ENCODE measurements at regions of chr9 and their contacts with region 1.

Region 1: DNA sequence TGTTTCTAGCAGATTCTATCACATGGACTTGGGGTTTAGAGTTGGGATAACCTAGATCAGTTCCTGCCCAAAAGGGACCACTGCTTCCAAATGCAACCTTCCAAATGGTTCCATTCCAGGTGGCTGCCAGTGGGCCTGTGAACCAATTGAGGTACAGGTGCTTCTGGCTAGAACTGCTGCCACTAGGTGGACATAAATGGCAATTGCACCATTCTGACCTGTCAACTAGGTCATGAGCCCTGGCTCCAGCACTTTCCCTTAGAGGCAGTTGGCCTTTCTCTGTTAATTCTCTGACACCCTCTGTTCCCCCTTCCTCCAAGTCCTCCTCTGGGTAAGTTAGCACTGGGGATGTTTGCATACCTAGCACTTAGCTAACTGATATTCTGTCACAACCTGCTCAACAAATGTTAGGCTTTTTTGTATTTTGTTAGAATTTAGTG is 16.6 kb upstream of the HEMGN start:
- DNase-seq: peak; percentile 74 to 77 (median 76)
- H3K4me3 ChIP-seq: no peak overlapping the region
- H3K27ac ChIP-seq: peak overlapping the region in 1 of 2 experiments; percentile 6
- H3K4me1 ChIP-seq: peaks cover 0 to 21% (median 13%) of the 10 kb centered on the region in 4 experiments
- H3K27me3 ChIP-seq: no peaks in the 10 kb centered on the region

Region 2: DNA sequence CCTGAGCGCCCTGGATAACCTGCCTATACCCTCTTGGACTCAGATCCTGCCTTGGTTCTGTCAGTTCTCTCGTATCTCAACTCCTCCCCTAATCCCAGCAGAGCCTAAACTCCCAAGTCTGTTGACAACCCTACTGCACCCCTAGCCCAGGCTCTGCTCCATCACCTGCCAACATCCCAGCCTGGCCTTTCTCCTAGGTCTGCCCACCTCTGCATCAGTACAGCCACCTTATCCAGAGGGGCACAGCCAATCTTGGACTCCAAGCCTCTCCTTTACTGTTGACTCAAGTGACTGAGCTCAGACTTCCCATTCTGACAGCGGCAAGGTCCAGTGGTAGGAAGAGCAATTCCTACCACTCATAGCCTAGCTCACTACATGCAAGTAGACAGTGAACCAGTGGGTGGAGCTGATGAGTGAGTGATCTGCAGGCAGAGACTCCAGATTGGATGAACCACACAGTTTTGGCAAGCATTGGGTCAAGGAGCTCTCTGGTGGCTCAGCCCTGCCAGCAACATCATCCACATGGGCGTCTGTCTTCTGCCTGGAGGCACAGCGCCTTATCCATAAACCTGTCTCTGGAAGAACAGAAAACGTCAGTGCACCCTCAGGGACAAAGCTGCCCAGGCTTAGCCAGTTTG is 58.8 kb before region 1 on chr9:
- CTCF ChIA-PET with region 1: no interaction called
- POLR2A ChIA-PET with region 1: no interaction called
- DNase-seq: peak in 2 of 3 donors; percentile 22 to 23
- H3K4me3 ChIP-seq: no peak overlapping the region
- H3K27ac ChIP-seq: no peak overlapping the region
- H3K4me1 ChIP-seq: no peaks in the 10 kb centered on the region
- H3K27me3 ChIP-seq: no peaks in the 10 kb centered on the region

Region 3: GRCh38 chr9:97934321-97935115 is 20.1 kb before region 1 on chr9:
- CTCF ChIA-PET with region 1: interaction called, 34 read pairs
- POLR2A ChIA-PET with region 1: no interaction called
- DNase-seq: peak in 2 of 3 donors; percentile 61 to 71
- H3K4me3 ChIP-seq: peak overlapping the region in 6 of 7 experiments; percentile 27 to 69 (median 48)
- H3K27ac ChIP-seq: peak overlapping the region; percentile 51 to 92
- H3K4me1 ChIP-seq: peaks cover 47 to 91% (median 75%) of the 10 kb centered on the region in 4 experiments
- H3K27me3 ChIP-seq: no peaks in the 10 kb centered on the region

Region 4: DNA sequence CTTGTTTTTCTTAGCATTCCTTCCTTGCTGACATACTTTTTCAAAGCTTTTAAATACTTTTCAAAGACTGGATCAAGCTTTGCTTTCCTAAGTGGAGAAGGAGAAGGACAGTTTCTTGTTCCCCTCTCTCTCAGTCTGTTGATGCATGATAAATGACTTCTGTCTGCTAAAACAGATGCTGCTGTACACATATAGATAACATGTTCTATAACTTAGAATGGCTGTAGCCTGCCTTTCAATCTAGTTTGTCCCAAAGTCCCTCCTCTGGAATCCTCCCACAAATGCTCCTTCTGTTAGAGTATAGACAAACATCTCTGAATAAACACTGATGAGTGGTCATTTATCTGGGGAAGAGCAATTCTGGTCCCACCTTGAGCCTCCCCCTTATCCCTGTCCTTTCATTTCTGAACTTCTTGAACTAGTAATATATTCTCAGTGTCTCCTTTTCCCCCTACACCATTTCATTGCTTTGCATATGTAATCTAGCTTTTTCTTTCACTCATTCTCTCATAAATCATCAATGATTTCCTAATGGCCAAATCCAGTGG is 11.2 kb before region 1 on chr9:
- CTCF ChIA-PET with region 1: interaction called, 25 read pairs
- POLR2A ChIA-PET with region 1: interaction called, 4 read pairs
- DNase-seq: peak in 2 of 3 donors; percentile 59 to 81
- H3K4me3 ChIP-seq: peak overlapping the region in 1 of 7 experiments; percentile 2
- H3K27ac ChIP-seq: peak overlapping the region; percentile 35 to 92
- H3K4me1 ChIP-seq: peaks cover 42 to 64% (median 60%) of the 10 kb centered on the region in 4 experiments
- H3K27me3 ChIP-seq: no peaks in the 10 kb centered on the region

Region 5: DNA sequence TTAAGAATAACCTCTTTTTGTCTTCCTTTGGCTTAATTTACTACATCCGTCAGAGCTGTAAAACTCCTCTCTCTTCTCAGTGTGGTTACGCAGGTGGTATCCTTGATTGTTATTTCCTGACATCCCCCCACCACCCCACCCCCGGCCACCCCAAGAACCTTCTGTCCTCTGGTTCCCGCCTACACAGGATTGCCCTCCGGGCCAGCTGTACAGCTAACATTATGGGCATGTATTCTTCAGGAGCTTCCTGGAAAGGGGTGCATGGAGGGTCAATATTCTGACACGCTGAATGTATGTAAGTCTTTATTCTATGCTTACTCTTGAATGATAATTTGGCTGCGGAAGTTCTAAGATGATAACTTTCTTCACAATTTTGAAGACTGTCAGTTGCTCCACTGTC is 15.6 kb after region 1 on chr9:
- CTCF ChIA-PET with region 1: interaction called, 30 read pairs
- POLR2A ChIA-PET with region 1: no interaction called
- DNase-seq: peak in 2 of 3 donors; percentile 63 to 73
- H3K4me3 ChIP-seq: peak overlapping the region in 2 of 7 experiments; percentile 35 to 42
- H3K27ac ChIP-seq: no peak overlapping the region
- H3K4me1 ChIP-seq: peaks cover 8 to 27% (median 14%) of the 10 kb centered on the region in 4 experiments
- H3K27me3 ChIP-seq: no peaks in the 10 kb centered on the region

Region 6: GRCh38 chr9:98207606-98208005 is 253.0 kb after region 1 on chr9:
- CTCF ChIA-PET with region 1: no interaction called
- POLR2A ChIA-PET with region 1: no interaction called
- DNase-seq: no peak
- H3K4me3 ChIP-seq: no peak overlapping the region
- H3K27ac ChIP-seq: no peak overlapping the region
- H3K4me1 ChIP-seq: peaks cover 0 to 2% (median 0%) of the 10 kb centered on the region in 4 experiments
- H3K27me3 ChIP-seq: no peaks in the 10 kb centered on the region

Measured in common myeloid progenitor, CD34-positive (primary cell).